ENCODE measurements at regions of chr2 and their contacts with region 1.

Region 1: GRCh38 chr2:197191177-197191939 is 119.2 kb downstream of the ANKRD44 start:
- DNase-seq: peak in 2 of 9 experiments; percentile 77 to 86
- ATAC-seq: peak; percentile 52
- H3K4me3 ChIP-seq: no peak overlapping the region
- H3K4me3 Mint-ChIP-seq: peak overlapping the region; percentile 10
- H3K27ac ChIP-seq: peak overlapping the region; percentile 16 to 72
- H3K27ac Mint-ChIP-seq: peak overlapping the region; percentile 82
- H3K4me1 ChIP-seq: peaks cover 84% of the 10 kb centered on the region
- H3K4me1 Mint-ChIP-seq: peaks cover 88% of the 10 kb centered on the region
- H3K27me3 ChIP-seq: no peaks in the 10 kb centered on the region
- H3K27me3 Mint-ChIP-seq: no peaks in the 10 kb centered on the region
- CTCF ChIP-seq: peak; percentile 83

Region 2: GRCh38 chr2:195451160-195451559 is 1740.2 kb before region 1 on chr2:
- CTCF ChIA-PET with region 1: no interaction called
- POLR2A ChIA-PET with region 1: no interaction called
- intact Hi-C with region 1: no loop called
- DNase-seq: no peak
- ATAC-seq: no peak
- H3K4me3 ChIP-seq: no peak overlapping the region
- H3K4me3 Mint-ChIP-seq: no peak overlapping the region
- H3K27ac ChIP-seq: no peak overlapping the region
- H3K27ac Mint-ChIP-seq: no peak overlapping the region
- H3K4me1 ChIP-seq: no peaks in the 10 kb centered on the region
- H3K4me1 Mint-ChIP-seq: peaks cover 2% of the 10 kb centered on the region
- H3K27me3 ChIP-seq: no peaks in the 10 kb centered on the region
- H3K27me3 Mint-ChIP-seq: no peaks in the 10 kb centered on the region
- CTCF ChIP-seq: no peak

Region 3: GRCh38 chr2:197124639-197125390 is 66.5 kb before region 1 on chr2:
- CTCF ChIA-PET with region 1: interaction called, 12 read pairs
- POLR2A ChIA-PET with region 1: no interaction called
- intact Hi-C with region 1: no loop called
- DNase-seq: no peak
- ATAC-seq: no peak
- H3K4me3 ChIP-seq: no peak overlapping the region
- H3K4me3 Mint-ChIP-seq: no peak overlapping the region
- H3K27ac ChIP-seq: no peak overlapping the region
- H3K27ac Mint-ChIP-seq: peak overlapping the region; percentile 77
- H3K4me1 ChIP-seq: peaks cover 28% of the 10 kb centered on the region
- H3K4me1 Mint-ChIP-seq: peaks cover 62% of the 10 kb centered on the region
- H3K27me3 ChIP-seq: no peaks in the 10 kb centered on the region
- H3K27me3 Mint-ChIP-seq: no peaks in the 10 kb centered on the region
- CTCF ChIP-seq: no peak

Region 4: GRCh38 chr2:197209742-197210408 is 18.5 kb after region 1 on chr2:
- CTCF ChIA-PET with region 1: interaction called, 43 read pairs
- POLR2A ChIA-PET with region 1: interaction called, 121 read pairs
- intact Hi-C with region 1: loop called (anchors 1 to 2 kb)
- DNase-seq: peak in 7 of 9 experiments; percentile 22 to 73 (median 48)
- ATAC-seq: peak; percentile 10
- H3K4me3 ChIP-seq: peak overlapping the region in 1 of 2 experiments; percentile 11
- H3K4me3 Mint-ChIP-seq: peak overlapping the region; percentile 54
- H3K27ac ChIP-seq: peak overlapping the region; percentile 24 to 73
- H3K27ac Mint-ChIP-seq: peak overlapping the region; percentile 100
- H3K4me1 ChIP-seq: peaks cover 99% of the 10 kb centered on the region
- H3K4me1 Mint-ChIP-seq: peaks cover 97% of the 10 kb centered on the region
- H3K27me3 ChIP-seq: no peaks in the 10 kb centered on the region
- H3K27me3 Mint-ChIP-seq: no peaks in the 10 kb centered on the region
- CTCF ChIP-seq: no peak

Region 5: DNA sequence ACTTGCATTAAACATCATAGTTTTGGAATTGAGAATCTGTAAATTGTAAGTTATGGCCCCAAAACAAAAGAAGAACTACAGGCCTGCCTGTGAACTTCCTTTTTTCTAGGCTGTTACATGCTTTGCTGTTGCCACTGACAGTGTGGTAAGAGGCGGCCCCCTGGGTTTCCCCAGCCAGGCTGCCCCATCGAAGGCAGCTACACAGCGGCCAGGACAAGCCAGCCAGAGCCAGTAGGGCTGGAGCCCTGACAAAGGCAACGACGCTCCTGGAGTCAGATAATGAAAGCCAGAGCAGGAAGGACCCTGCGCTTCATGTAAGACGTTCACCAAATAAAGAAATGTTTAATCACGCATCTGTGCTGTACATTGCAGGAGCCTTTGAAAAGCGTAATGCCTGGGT is 64.2 kb after region 1 on chr2:
- CTCF ChIA-PET with region 1: interaction called, 5 read pairs
- POLR2A ChIA-PET with region 1: interaction called, 3 read pairs
- intact Hi-C with region 1: loop called (anchors 5 kb)
- DNase-seq: peak; percentile 45 to 92 (median 72)
- ATAC-seq: peak; percentile 79
- H3K4me3 ChIP-seq: peak overlapping the region; percentile 9 to 38
- H3K4me3 Mint-ChIP-seq: peak overlapping the region; percentile 74
- H3K27ac ChIP-seq: peak overlapping the region; percentile 46 to 70
- H3K27ac Mint-ChIP-seq: peak overlapping the region; percentile 95
- H3K4me1 ChIP-seq: peaks cover 83% of the 10 kb centered on the region
- H3K4me1 Mint-ChIP-seq: peaks cover 82% of the 10 kb centered on the region
- H3K27me3 ChIP-seq: no peaks in the 10 kb centered on the region
- H3K27me3 Mint-ChIP-seq: no peaks in the 10 kb centered on the region
- CTCF ChIP-seq: no peak

Region 6: DNA sequence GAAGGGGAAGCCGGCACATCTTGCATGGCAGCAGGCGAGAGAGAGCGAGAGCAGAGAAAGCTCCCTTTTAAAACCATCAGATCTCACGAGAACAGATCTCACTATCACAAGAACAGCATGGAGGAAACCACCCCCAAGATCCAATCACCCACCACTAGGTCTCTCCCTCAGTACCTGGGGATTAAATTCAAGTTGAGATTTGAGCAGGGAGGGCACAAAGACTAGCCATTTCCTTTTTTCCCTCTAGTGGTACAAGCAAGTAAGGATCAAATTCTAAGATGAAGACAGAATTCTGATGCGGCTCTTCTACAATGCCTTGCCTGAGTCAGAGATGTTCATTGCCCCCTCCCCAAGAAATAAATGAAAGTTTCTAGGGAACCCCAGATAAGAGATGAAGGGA is 164.8 kb after region 1 on chr2:
- CTCF ChIA-PET with region 1: interaction called, 12 read pairs
- POLR2A ChIA-PET with region 1: no interaction called
- intact Hi-C with region 1: loop called in 1 of 2 experiments (anchors 2 kb)
- DNase-seq: peak in 2 of 9 experiments; percentile 33 to 47
- ATAC-seq: peak; percentile 62
- H3K4me3 ChIP-seq: no peak overlapping the region
- H3K4me3 Mint-ChIP-seq: no peak overlapping the region
- H3K27ac ChIP-seq: no peak overlapping the region
- H3K27ac Mint-ChIP-seq: peak overlapping the region; percentile 28
- H3K4me1 ChIP-seq: peaks cover 15% of the 10 kb centered on the region
- H3K4me1 Mint-ChIP-seq: peaks cover 23% of the 10 kb centered on the region
- H3K27me3 ChIP-seq: no peaks in the 10 kb centered on the region
- H3K27me3 Mint-ChIP-seq: no peaks in the 10 kb centered on the region
- CTCF ChIP-seq: peak; percentile 50

Region 7: GRCh38 chr2:197383823-197384222 is 192.5 kb after region 1 on chr2:
- CTCF ChIA-PET with region 1: interaction called, 25 read pairs
- POLR2A ChIA-PET with region 1: no interaction called
- intact Hi-C with region 1: loop called in 1 of 2 experiments (anchors 1 kb)
- DNase-seq: no peak
- ATAC-seq: no peak
- H3K4me3 ChIP-seq: no peak overlapping the region
- H3K4me3 Mint-ChIP-seq: no peak overlapping the region
- H3K27ac ChIP-seq: no peak overlapping the region
- H3K27ac Mint-ChIP-seq: no peak overlapping the region
- H3K4me1 ChIP-seq: no peaks in the 10 kb centered on the region
- H3K4me1 Mint-ChIP-seq: no peaks in the 10 kb centered on the region
- H3K27me3 ChIP-seq: no peaks in the 10 kb centered on the region
- H3K27me3 Mint-ChIP-seq: no peaks in the 10 kb centered on the region
- CTCF ChIP-seq: no peak

Measured in CD8-positive, alpha-beta T cell (primary cell).